Caco-2 (cell line): ENCODE measurements at regions of chr7 and their contacts with region 1.

Region 1: DNA sequence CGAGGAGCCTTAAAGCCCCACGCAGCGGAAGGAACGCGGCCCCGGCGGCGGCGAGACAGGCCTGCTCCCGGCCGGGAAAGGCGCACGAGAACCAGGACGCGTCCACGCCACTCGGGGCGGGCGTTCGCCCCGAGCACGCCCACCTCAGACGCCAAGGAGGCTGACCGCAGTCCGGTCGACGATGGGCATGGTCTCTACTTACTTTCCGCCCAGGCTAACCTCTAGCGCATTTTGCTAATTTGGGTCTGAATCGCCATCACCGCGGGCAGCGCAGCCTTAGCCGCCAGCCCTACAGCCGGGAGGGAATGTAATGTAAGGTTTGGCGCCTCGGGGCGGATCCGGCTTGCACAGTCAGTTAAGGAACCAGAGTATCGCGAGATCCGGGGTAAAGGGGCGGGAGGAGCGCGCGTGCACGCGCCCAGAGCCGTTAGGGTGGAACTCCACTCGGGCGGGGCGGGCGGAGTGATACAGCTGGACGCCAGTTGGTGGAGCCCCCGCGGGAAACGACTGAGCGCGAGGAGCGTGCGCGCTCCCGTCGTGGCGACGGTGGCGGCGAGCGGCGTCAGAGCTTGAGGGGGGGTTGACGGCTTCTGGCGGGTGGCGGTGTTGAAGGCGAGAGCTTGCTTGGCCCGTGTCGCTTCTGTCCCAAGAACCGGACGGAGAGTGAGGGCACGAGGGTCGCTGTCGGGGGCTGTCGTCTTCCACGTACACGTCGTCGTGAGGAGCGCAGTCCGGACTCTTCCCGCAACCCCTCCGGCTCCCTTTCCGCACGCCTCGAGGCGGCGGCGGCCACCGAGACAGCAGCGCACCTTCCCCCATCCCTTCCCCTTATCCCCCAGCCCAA is at the start of gene LUC7L2:
- DNase-seq: peak; percentile 99
- H3K4me3 ChIP-seq: peak within 1 kb of the TSS; percentile 100
- H3K4me3 Mint-ChIP-seq: peak within 1 kb of the TSS; percentile 99
- H3K27ac Mint-ChIP-seq: peak within 1 kb of the TSS; percentile 98
- H3K4me1 ChIP-seq: no peaks in the 10 kb centered on the region
- H3K4me1 Mint-ChIP-seq: peaks cover 7% of the 10 kb centered on the region
- H3K27me3 ChIP-seq: no peaks in the 10 kb centered on the region
- H3K27me3 Mint-ChIP-seq: no peaks in the 10 kb centered on the region
- CTCF ChIP-seq: peak in 1 of 2 experiments; percentile 5
- total RNA-seq, gene LUC7L2: 74.2 and 75.8 TPM in 2 replicates

Region 2: DNA sequence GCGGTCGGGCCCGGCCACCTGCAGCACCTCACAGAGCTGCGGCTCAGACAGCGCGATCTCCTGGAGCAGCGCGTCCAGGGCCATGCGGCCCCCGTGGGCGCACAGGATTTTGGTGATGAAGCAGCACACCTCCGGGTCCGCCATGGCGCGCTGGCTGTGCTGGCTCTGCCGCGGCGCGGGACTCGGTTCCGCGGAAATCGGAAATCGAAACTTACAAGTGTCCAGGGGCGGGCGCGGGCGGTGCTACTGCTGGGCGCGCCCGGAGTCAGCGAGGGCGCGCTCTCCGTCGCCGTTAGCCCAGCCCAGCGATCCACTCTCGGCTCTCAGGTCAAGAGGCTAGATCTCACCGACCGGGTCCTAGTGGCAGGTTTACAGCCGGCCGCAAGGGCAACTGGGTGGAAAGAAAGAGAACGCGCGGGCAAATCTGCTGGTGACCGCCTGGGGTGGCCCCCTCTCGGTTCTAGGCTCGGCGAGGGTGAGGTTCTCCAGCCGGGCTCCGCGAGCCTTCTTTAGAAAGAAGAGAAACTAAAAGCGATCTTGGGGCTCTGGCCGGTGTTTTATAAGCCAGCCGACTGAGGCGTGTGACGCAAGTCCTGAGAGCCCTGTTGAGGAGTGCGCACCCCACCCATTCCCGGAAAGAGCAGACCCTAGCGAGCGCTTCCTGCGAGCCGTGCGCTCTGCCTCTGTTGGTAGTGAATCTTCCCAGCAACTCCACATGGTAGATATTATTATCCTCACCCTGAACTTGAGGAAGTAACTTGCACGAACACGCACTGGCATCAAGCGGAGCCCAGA is 250.2 kb before region 1 on chr7 and contains the start of gene ZC3HAV1:
- CTCF ChIA-PET with region 1: no interaction called
- POLR2A ChIA-PET with region 1: no interaction called
- intact Hi-C with region 1: loop called (anchors 5 kb)
- DNase-seq: peak; percentile 88 to 90
- H3K4me3 ChIP-seq: peak within 1 kb of the TSS; percentile 57
- H3K4me3 Mint-ChIP-seq: peak within 1 kb of the TSS; percentile 85
- H3K27ac Mint-ChIP-seq: peak within 1 kb of the TSS; percentile 55
- H3K4me1 ChIP-seq: peaks cover 8% of the 10 kb centered on the region
- H3K4me1 Mint-ChIP-seq: peaks cover 6% of the 10 kb centered on the region
- H3K27me3 ChIP-seq: no peaks in the 10 kb centered on the region
- H3K27me3 Mint-ChIP-seq: no peaks in the 10 kb centered on the region
- CTCF ChIP-seq: peak; percentile 21 to 42
- total RNA-seq, gene ZC3HAV1: 30.8 and 30.9 TPM in 2 replicates

Region 3: GRCh38 chr7:139200382-139200781 is 159.2 kb before region 1 on chr7:
- CTCF ChIA-PET with region 1: no interaction called
- POLR2A ChIA-PET with region 1: no interaction called
- intact Hi-C with region 1: no loop called
- DNase-seq: no peak
- H3K4me3 ChIP-seq: no peak overlapping the region
- H3K4me3 Mint-ChIP-seq: no peak overlapping the region
- H3K27ac Mint-ChIP-seq: no peak overlapping the region
- H3K4me1 ChIP-seq: no peaks in the 10 kb centered on the region
- H3K4me1 Mint-ChIP-seq: no peaks in the 10 kb centered on the region
- H3K27me3 ChIP-seq: no peaks in the 10 kb centered on the region
- H3K27me3 Mint-ChIP-seq: no peaks in the 10 kb centered on the region
- CTCF ChIP-seq: no peak

Region 4: GRCh38 chr7:139230774-139231512 is 128.6 kb before region 1 on chr7 and contains the start of gene UBN2:
- CTCF ChIA-PET with region 1: no interaction called
- POLR2A ChIA-PET with region 1: interaction called, 6 read pairs
- intact Hi-C with region 1: loop called (anchors 1 kb)
- DNase-seq: peak; percentile 96 to 97
- H3K4me3 ChIP-seq: peak within 1 kb of the TSS; percentile 100
- H3K4me3 Mint-ChIP-seq: peak within 1 kb of the TSS; percentile 87
- H3K27ac Mint-ChIP-seq: peak within 1 kb of the TSS; percentile 89
- H3K4me1 ChIP-seq: peaks cover 6% of the 10 kb centered on the region; the same call in 1 of the 2 replicates
- H3K4me1 Mint-ChIP-seq: peaks cover 8% of the 10 kb centered on the region
- H3K27me3 ChIP-seq: no peaks in the 10 kb centered on the region
- H3K27me3 Mint-ChIP-seq: no peaks in the 10 kb centered on the region
- CTCF ChIP-seq: no peak
- total RNA-seq, gene UBN2: 21.3 and 23.4 TPM in 2 replicates

Region 5: GRCh38 chr7:139297795-139298194 is 61.8 kb before region 1 on chr7:
- CTCF ChIA-PET with region 1: no interaction called
- POLR2A ChIA-PET with region 1: no interaction called
- intact Hi-C with region 1: loop called (anchors 2 kb)
- DNase-seq: peak; percentile 62 to 74
- H3K4me3 ChIP-seq: no peak overlapping the region
- H3K4me3 Mint-ChIP-seq: peak overlapping the region; percentile 58
- H3K27ac Mint-ChIP-seq: peak overlapping the region; percentile 56
- H3K4me1 ChIP-seq: peaks cover 60% of the 10 kb centered on the region
- H3K4me1 Mint-ChIP-seq: peaks cover 22% of the 10 kb centered on the region
- H3K27me3 ChIP-seq: no peaks in the 10 kb centered on the region
- H3K27me3 Mint-ChIP-seq: no peaks in the 10 kb centered on the region
- CTCF ChIP-seq: no peak

Region 6: GRCh38 chr7:139321071-139321745 is 38.4 kb before region 1 on chr7:
- CTCF ChIA-PET with region 1: no interaction called
- POLR2A ChIA-PET with region 1: no interaction called
- intact Hi-C with region 1: loop called (anchors 2 kb)
- DNase-seq: peak; percentile 46 to 49
- H3K4me3 ChIP-seq: no peak overlapping the region
- H3K4me3 Mint-ChIP-seq: no peak overlapping the region
- H3K27ac Mint-ChIP-seq: no peak overlapping the region
- H3K4me1 ChIP-seq: peaks cover 16% of the 10 kb centered on the region
- H3K4me1 Mint-ChIP-seq: peaks cover 16% of the 10 kb centered on the region
- H3K27me3 ChIP-seq: no peaks in the 10 kb centered on the region
- H3K27me3 Mint-ChIP-seq: no peaks in the 10 kb centered on the region
- CTCF ChIP-seq: peak; percentile 24 to 38

Region 7: GRCh38 chr7:139753081-139753692 is 393.6 kb after region 1 on chr7:
- CTCF ChIA-PET with region 1: no interaction called
- POLR2A ChIA-PET with region 1: no interaction called
- intact Hi-C with region 1: no loop called
- DNase-seq: no peak
- H3K4me3 ChIP-seq: no peak overlapping the region
- H3K4me3 Mint-ChIP-seq: no peak overlapping the region
- H3K27ac Mint-ChIP-seq: no peak overlapping the region
- H3K4me1 ChIP-seq: peaks cover 7% of the 10 kb centered on the region
- H3K4me1 Mint-ChIP-seq: peaks cover 16% of the 10 kb centered on the region
- H3K27me3 ChIP-seq: no peaks in the 10 kb centered on the region
- H3K27me3 Mint-ChIP-seq: no peaks in the 10 kb centered on the region
- CTCF ChIP-seq: peak in 1 of 2 experiments; percentile 5

Region 8: GRCh38 chr7:139783647-139784385 is 424.2 kb after region 1 on chr7:
- CTCF ChIA-PET with region 1: no interaction called
- POLR2A ChIA-PET with region 1: interaction called, 12 read pairs
- intact Hi-C with region 1: no loop called
- DNase-seq: peak in 1 of 2 experiments; percentile 30
- H3K4me3 ChIP-seq: no peak overlapping the region
- H3K4me3 Mint-ChIP-seq: no peak overlapping the region
- H3K27ac Mint-ChIP-seq: no peak overlapping the region
- H3K4me1 ChIP-seq: peaks cover 3% of the 10 kb centered on the region; the same call in 1 of the 2 replicates
- H3K4me1 Mint-ChIP-seq: no peaks in the 10 kb centered on the region
- H3K27me3 ChIP-seq: no peaks in the 10 kb centered on the region
- H3K27me3 Mint-ChIP-seq: peaks cover 4% of the 10 kb centered on the region
- CTCF ChIP-seq: no peak